ENCODE measurements at regions of chr15 and their contacts with region 1.

Region 1: GRCh38 chr15:93997084-93997918 is 234.1 kb upstream of the MCTP2 start:
- DNase-seq: peak; percentile 5
- ATAC-seq: no peak
- H3K4me3 ChIP-seq: no peak overlapping the region
- H3K27ac ChIP-seq: no peak overlapping the region
- H3K4me1 ChIP-seq: no peaks in the 10 kb centered on the region
- H3K27me3 ChIP-seq: no peaks in the 10 kb centered on the region
- CTCF ChIP-seq: peak; percentile 72; the same call in 1 of the 2 replicates

Region 2: DNA sequence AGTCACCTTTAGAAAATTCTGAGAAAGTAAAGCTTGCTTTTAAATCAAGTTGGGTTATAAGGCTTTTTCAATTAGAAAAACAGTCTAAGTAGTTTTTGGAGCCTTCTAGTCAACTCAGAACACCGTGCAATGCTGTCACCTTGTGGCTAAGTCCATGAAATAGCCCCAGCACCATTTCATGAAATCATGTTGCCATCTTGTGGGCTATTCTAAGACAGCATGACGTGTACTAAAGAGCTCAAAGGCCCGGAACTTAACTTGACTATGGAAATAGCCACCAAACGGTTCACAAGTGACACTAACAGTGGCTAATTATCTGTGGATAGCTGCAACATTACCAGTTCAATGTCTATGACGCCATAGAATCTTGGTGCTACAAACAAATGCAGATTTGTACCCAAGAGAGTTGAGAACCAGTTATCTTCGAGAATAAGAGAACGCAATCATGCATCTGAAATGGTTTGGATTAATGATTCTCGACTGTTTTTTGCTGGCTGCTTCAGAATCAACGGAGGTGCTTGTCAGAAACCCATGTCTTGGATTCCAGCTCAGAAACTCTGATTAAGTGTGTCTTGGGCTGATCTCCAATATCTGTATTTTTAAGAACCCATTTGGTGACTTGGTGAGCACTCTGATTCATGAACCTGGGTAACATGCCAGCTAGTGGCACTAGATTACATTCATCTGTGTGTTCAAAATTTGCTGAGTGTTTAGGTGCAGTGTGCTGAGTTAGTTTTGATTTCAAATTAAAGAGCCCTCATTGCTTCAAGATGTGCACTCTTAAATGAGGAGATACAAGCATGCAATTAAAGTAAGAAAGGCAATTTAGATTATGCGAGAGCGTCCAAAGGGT is 122.8 kb after region 1 on chr15:
- CTCF ChIA-PET with region 1: interaction called, 7 read pairs
- POLR2A ChIA-PET with region 1: no interaction called
- in situ Hi-C with region 1: no loop called
- intact Hi-C with region 1: loop called (anchors 2 kb)
- DNase-seq: peak; percentile 77
- ATAC-seq: peak; percentile 99
- H3K4me3 ChIP-seq: no peak overlapping the region
- H3K27ac ChIP-seq: no peak overlapping the region
- H3K4me1 ChIP-seq: no peaks in the 10 kb centered on the region
- H3K27me3 ChIP-seq: no peaks in the 10 kb centered on the region
- CTCF ChIP-seq: peak; percentile 94

Region 3: DNA sequence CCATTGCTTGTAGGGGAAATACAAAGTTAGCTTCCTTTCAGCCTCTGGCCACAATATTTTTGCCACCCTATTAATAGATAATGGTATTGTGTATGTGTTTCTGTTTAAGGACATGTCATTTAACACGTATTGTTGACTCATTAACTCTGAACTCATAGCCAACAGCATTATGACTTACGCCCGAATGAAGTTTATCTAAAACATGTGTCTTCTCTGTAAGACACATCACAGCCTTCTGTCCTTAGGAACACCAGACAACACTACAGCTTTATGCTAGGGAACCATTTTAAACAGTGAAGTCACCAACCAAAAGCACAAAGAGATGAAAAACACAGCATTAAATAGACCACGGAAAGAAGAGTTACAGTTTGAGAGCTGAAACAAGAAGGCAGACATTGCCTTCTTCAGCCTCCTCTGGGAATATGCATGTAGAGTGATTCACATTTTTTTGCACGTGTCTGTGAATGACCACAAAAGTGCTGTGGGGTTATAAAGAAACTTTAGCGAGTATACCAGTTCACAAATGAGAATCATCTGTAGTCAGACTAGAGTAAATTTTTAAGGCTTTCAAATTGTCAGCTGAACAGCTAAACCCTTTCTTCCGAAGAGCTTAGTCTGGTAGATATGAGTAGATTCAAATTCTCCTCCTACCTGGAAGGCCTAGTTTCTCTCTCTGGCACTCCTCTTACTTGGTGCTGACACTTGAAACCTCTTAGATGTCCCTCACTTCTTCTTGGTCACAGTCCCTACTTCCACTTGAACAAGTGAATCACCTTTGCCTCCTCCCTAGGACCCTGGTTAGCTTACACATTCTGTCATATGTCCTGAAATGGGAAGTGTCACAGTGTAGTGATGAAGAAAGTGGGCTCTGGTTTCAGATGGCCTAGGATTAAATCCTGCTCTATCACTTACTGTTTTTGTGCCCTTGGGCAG is 266.3 kb after region 1 on chr15:
- CTCF ChIA-PET with region 1: no interaction called
- POLR2A ChIA-PET with region 1: no interaction called
- in situ Hi-C with region 1: no loop called
- intact Hi-C with region 1: no loop called
- DNase-seq: no peak
- ATAC-seq: no peak
- H3K4me3 ChIP-seq: no peak overlapping the region
- H3K27ac ChIP-seq: no peak overlapping the region
- H3K4me1 ChIP-seq: no peaks in the 10 kb centered on the region
- H3K27me3 ChIP-seq: no peaks in the 10 kb centered on the region
- CTCF ChIP-seq: no peak

Region 4: GRCh38 chr15:94366781-94367180 is 369.5 kb after region 1 on chr15:
- CTCF ChIA-PET with region 1: no interaction called
- POLR2A ChIA-PET with region 1: no interaction called
- in situ Hi-C with region 1: no loop called
- intact Hi-C with region 1: no loop called
- DNase-seq: no peak
- ATAC-seq: no peak
- H3K4me3 ChIP-seq: no peak overlapping the region
- H3K27ac ChIP-seq: no peak overlapping the region
- H3K4me1 ChIP-seq: no peaks in the 10 kb centered on the region
- H3K27me3 ChIP-seq: no peaks in the 10 kb centered on the region
- CTCF ChIP-seq: no peak

Measured in Panc1 (cell line).